Heart right ventricle (tissue), 16 donors: ENCODE measurements at regions of chr5 and their contacts with region 1.

Region 1: GRCh38 chr5:77390795-77391194 is 101.3 kb downstream of the WDR41 start:
- DNase-seq: no peak
- ATAC-seq: peak in 1 of 8 donors; percentile 31
- H3K4me3 ChIP-seq: no peak overlapping the region
- H3K27ac ChIP-seq: no peak overlapping the region
- H3K4me1 ChIP-seq: no peaks in the 10 kb centered on the region
- H3K27me3 ChIP-seq: peaks cover 0 to 3% (median 0%) of the 10 kb centered on the region in 7 donors
- CTCF ChIP-seq: no peak

Region 2: DNA sequence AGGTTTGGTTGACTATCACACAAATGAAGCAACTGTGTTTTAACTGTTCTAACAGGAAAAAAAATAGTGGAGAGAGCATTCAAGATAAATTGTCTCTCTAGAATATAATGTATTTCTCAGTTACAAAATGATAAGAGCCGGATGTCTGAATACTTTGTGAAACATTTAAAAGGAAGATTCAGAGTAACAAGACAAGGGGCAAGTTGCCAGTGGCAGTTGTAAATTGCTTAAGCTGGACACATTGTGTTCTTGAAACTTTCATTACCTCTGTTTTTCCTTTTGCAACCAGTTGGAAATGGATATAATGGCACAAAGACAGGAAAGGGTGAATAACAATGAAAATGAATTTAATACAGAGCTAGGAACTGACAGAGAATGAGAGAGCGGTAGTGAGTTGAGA is 400.6 kb after region 1 on chr5:
- intact Hi-C with region 1: no loop called
- DNase-seq: no peak
- ATAC-seq: no peak
- H3K4me3 ChIP-seq: no peak overlapping the region
- H3K27ac ChIP-seq: no peak overlapping the region
- H3K4me1 ChIP-seq: no peaks in the 10 kb centered on the region
- H3K27me3 ChIP-seq: no peaks in the 10 kb centered on the region
- CTCF ChIP-seq: no peak

Region 3: DNA sequence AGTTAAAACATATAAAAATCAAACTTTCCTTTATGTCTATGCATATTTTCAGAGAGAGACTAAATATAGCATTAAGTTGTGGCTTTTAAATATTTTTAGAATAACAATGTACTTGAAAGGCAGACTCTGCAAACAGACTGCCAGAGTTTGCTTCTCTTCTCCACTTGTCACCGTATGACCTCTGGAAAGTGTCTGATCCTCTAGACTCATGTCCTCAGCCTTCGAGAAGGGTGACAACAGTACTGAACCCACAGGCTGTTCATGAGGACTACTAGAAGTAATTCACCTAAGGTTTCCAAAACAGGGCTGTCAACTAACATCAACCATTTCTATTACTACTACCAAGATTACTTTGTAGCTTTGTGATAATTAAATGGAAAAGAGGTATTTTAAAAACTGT is 553.1 kb after region 1 on chr5:
- intact Hi-C with region 1: loop called in 1 of 10 experiments (anchors 5 kb)
- DNase-seq: no peak
- ATAC-seq: no peak
- H3K4me3 ChIP-seq: no peak overlapping the region
- H3K27ac ChIP-seq: no peak overlapping the region
- H3K4me1 ChIP-seq: no peaks in the 10 kb centered on the region
- H3K27me3 ChIP-seq: peaks cover 0 to 70% (median 21%) of the 10 kb centered on the region in 7 donors
- CTCF ChIP-seq: no peak